Left colon (tissue), 2 donors: ENCODE measurements at regions of chr11 and their contacts with region 1.

Region 1: GRCh38 chr11:62542750-62543567 is 3.6 kb downstream of the AHNAK start:
- DNase-seq: peak; percentile 83 to 88
- ATAC-seq: peak; percentile 35

Region 2: GRCh38 chr11:62427630-62428233 is 115.2 kb before region 1 on chr11:
- intact Hi-C with region 1: loop called (anchors 5 to 10 kb)
- DNase-seq: no peak
- ATAC-seq: no peak